Breast epithelium (tissue), 4 donors: ENCODE measurements at regions of chr9 and their contacts with region 1.

Region 1: GRCh38 chr9:99807276-99807852 is 14.3 kb upstream of the NR4A3 start:
- DNase-seq: peak; percentile 67 to 71
- H3K4me3 ChIP-seq: no peak overlapping the region
- H3K27ac ChIP-seq: peak overlapping the region in 1 of 2 donors; percentile 33
- H3K4me1 ChIP-seq: no peaks in the 10 kb centered on the region
- H3K27me3 ChIP-seq: no peaks in the 10 kb centered on the region
- CTCF ChIP-seq: peak; percentile 46 to 70 (median 54)
- POLR2A ChIP-seq: no peak

Region 2: DNA sequence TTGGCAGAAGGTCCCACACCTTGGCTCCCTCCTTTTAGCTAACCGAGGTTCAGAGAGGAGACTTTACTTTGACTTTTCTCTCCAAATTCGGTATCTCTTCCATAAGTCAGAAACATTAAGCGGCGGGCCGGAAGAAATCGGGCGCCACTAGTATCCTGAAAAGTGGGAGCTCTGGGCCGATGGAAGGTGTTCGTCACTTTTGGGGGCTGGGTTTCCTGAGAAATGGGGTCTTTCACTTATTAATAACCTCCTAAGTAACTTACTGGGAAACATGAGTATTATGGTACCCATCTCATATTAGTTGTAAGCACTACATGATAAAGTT is 99.8 kb after region 1 on chr9:
- intact Hi-C with region 1: loop called (anchors 2 kb)
- DNase-seq: no peak
- H3K4me3 ChIP-seq: peak overlapping the region; percentile 73 to 97 (median 94)
- H3K27ac ChIP-seq: peak overlapping the region; percentile 95 to 100
- H3K4me1 ChIP-seq: peaks cover 0 to 5% of the 10 kb centered on the region in 2 donors
- H3K27me3 ChIP-seq: no peaks in the 10 kb centered on the region
- CTCF ChIP-seq: no peak
- POLR2A ChIP-seq: no peak